ENCODE measurements at regions of chr13 and their contacts with region 1.

Region 1: DNA sequence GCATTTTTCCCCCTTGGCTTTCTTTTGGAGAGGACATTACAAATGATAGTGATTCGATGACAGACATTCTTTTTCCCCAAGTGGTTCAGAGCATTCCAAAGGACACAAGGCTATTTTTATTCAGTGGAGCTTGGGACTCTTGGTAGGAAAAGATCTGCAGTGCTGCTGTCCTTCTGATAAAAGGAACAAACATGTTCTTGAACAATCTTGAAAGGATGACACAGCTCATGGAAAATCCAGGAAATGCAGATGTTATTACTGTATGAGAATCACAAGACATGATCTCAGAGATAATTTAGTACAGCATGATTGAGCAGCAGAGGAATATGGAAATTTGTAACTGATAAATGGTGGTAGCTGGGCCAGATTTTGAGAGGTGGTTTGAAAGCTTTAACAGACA is 96.2 kb upstream of the RFC3 start:
- DNase-seq: no peak
- ATAC-seq: peak; percentile 73

Region 2: DNA sequence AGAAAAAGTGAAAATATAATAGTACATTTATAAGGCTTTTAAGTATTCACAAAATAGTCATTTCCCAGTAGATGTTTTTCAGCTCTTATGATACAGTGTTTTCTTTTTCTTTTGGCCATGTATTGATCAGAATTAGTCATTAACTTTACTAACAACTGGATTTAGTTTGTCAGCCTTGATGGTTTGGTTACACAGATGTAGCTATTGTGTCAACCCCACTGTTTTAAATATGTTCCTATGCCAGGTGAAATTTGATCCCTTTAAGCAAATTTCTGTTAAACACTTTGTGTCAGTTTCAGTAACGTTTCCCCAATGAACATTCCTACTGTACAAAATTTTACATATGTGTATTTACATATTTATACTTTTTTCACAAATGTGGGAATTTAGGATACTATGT is 174.7 kb before region 1 on chr13:
- intact Hi-C with region 1: loop called (anchors 2 kb)
- DNase-seq: no peak
- ATAC-seq: no peak